ENCODE measurements at regions of chr5 and their contacts with region 1.

Region 1: GRCh38 chr5:102681407-102681983 is 73.6 kb upstream of the PAM start:
- DNase-seq: peak; percentile 3
- ATAC-seq: peak; percentile 97
- H3K4me3 ChIP-seq: no peak overlapping the region
- H3K27ac ChIP-seq: no peak overlapping the region
- H3K4me1 ChIP-seq: no peaks in the 10 kb centered on the region
- H3K27me3 ChIP-seq: no peaks in the 10 kb centered on the region
- CTCF ChIP-seq: peak; percentile 83 to 94 (median 86); a peak in 5 of 6 replicates
- EP300 ChIP-seq: no peak
- POLR2A ChIP-seq: no peak
- RAD21 ChIP-seq: peak; percentile 92

Region 2: GRCh38 chr5:102700120-102700831 is 18.8 kb after region 1 on chr5:
- CTCF ChIA-PET with region 1: interaction called, 23 read pairs
- POLR2A ChIA-PET with region 1: no interaction called
- RAD21 ChIA-PET with region 1: interaction called, 3 read pairs
- SMC1A ChIA-PET with region 1: interaction called, 8 read pairs
- in situ Hi-C with region 1: no loop called
- intact Hi-C with region 1: no loop called
- DNase-seq: no peak
- ATAC-seq: no peak
- H3K4me3 ChIP-seq: no peak overlapping the region
- H3K27ac ChIP-seq: no peak overlapping the region
- H3K4me1 ChIP-seq: no peaks in the 10 kb centered on the region
- H3K27me3 ChIP-seq: no peaks in the 10 kb centered on the region
- CTCF ChIP-seq: no peak
- EP300 ChIP-seq: no peak
- POLR2A ChIP-seq: no peak
- RAD21 ChIP-seq: no peak

Region 3: DNA sequence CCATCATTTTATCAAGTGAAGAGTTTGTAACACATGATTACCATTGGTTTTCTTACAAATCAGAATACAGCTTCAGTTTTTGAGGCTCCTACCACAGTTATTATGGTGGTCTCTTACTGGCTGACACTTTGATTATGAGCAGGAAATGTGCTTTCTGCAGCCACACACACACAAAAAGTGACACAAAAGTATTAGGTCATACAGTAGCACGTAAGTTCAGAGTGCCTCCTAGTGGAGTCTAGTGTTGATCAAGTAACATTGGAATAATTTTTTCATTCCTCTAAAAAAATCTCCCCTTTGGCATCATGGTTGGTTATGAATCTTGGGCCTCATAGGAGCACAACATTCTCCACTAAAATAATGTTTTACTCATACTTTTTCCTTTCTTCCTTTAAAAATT is 111.2 kb after region 1 on chr5:
- CTCF ChIA-PET with region 1: interaction called, 16 read pairs
- POLR2A ChIA-PET with region 1: no interaction called
- RAD21 ChIA-PET with region 1: no interaction called
- SMC1A ChIA-PET with region 1: interaction called, 5 read pairs
- in situ Hi-C with region 1: no loop called
- intact Hi-C with region 1: loop called (anchors 5 kb)
- DNase-seq: no peak
- ATAC-seq: peak; percentile 55
- H3K4me3 ChIP-seq: no peak overlapping the region
- H3K27ac ChIP-seq: no peak overlapping the region
- H3K4me1 ChIP-seq: no peaks in the 10 kb centered on the region
- H3K27me3 ChIP-seq: no peaks in the 10 kb centered on the region
- CTCF ChIP-seq: peak in 2 of 3 experiments; percentile 18 to 32; a peak in 2 of 6 replicates
- EP300 ChIP-seq: no peak
- POLR2A ChIP-seq: no peak
- RAD21 ChIP-seq: peak; percentile 31; the same call in 1 of the 2 replicates

Region 4: DNA sequence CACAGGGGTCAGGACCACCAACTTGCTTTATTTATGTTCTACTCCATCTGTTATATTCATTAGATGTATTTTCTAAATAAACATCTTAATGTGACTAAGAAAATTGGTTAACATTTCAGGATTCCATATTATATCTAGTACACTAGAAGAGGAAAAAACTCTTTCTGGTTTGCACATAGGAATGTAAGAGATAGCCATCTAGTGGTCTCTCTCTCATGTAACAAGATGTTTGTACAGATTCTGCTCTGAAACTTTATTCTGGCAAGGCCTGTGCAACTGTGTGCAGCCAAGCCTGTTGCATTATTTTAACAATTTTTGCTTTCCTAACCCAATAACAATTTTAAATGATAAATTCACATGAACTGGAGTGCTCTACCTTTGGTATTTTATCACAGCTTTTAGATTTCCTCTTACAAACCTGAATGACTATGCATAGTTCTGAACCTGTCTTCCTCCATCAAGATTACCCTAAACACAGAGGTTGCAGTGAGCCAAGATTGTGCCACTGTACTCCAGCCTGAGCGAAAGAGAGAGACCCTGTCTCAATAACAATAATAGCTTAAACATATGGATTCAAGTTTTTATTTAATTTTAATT is 290.3 kb after region 1 on chr5:
- CTCF ChIA-PET with region 1: interaction called, 44 read pairs
- POLR2A ChIA-PET with region 1: no interaction called
- RAD21 ChIA-PET with region 1: interaction called, 5 read pairs
- SMC1A ChIA-PET with region 1: interaction called, 15 read pairs
- in situ Hi-C with region 1: no loop called
- intact Hi-C with region 1: loop called (anchors 2 kb)
- DNase-seq: no peak
- ATAC-seq: peak; percentile 63
- H3K4me3 ChIP-seq: no peak overlapping the region
- H3K27ac ChIP-seq: no peak overlapping the region
- H3K4me1 ChIP-seq: no peaks in the 10 kb centered on the region
- H3K27me3 ChIP-seq: no peaks in the 10 kb centered on the region
- CTCF ChIP-seq: peak; percentile 34 to 50 (median 43); a peak in 4 of 6 replicates
- EP300 ChIP-seq: no peak
- POLR2A ChIP-seq: no peak
- RAD21 ChIP-seq: peak; percentile 53

Region 5: DNA sequence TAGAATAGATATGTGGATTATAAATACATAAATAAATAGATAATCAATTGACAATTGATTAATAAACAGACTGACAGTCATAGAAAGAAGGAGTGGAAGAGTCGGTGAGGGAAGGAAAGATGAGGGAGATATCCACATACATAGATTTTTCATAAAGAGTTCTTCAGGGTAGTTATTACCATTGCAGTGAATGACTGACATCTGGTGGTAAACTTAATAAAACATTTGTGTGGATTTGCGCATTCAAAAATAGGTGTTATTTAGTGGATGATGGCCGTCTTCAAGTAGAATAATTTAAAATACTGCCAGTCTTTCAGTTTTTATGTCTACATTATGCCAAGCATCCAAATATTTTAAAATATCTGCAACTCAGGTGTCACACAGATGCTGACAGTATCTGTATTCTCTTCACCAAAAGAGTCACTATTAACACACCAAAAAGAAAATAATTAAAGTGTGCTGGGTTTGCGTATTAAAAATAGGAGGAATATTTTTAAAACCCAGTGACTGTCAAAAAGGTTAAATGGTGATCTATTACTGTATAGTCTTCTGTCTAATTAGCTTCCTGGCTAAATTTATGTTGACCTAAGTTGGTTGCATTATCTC is 359.7 kb after region 1 on chr5:
- CTCF ChIA-PET with region 1: interaction called, 37 read pairs
- POLR2A ChIA-PET with region 1: no interaction called
- RAD21 ChIA-PET with region 1: interaction called, 11 read pairs
- SMC1A ChIA-PET with region 1: interaction called, 31 read pairs
- in situ Hi-C with region 1: loop called (anchors 10 kb)
- intact Hi-C with region 1: loop called (anchors 1 kb)
- DNase-seq: no peak
- ATAC-seq: peak; percentile 68
- H3K4me3 ChIP-seq: no peak overlapping the region
- H3K27ac ChIP-seq: no peak overlapping the region
- H3K4me1 ChIP-seq: no peaks in the 10 kb centered on the region
- H3K27me3 ChIP-seq: no peaks in the 10 kb centered on the region
- CTCF ChIP-seq: peak; percentile 16 to 58 (median 28); a peak in 4 of 6 replicates
- EP300 ChIP-seq: no peak
- POLR2A ChIP-seq: no peak
- RAD21 ChIP-seq: peak; percentile 79

Region 6: DNA sequence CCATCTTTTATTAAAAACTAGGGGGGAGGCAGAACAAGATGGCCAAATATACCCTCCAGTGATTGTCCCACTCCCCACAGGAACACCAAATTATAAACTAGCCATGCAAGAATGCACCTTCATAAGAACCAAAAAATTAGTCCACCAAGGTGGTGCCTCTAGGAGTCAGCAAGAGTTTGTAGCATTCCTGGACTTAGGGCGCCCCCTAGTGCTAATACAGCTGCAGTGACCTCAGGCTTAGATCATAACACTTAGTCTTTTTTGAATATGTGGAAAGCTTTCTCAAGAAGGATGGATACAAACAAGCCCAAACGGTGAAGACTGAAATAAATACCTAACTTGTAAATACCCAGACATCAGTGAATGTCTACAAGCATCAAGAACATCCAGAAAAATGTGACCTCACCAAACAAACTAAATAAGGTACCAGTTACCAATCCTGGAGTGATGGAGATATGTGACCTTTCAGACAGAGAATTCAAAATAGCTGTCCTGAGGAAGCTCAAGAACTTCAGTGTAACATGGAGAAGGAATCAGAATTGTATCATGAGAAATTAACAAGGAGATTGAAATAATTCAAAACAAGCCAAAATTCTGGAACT is 457.9 kb after region 1 on chr5:
- CTCF ChIA-PET with region 1: interaction called, 54 read pairs
- POLR2A ChIA-PET with region 1: no interaction called
- RAD21 ChIA-PET with region 1: interaction called, 27 read pairs
- SMC1A ChIA-PET with region 1: interaction called, 25 read pairs
- in situ Hi-C with region 1: loop called (anchors 5 kb)
- intact Hi-C with region 1: loop called (anchors 1 kb)
- DNase-seq: peak; percentile 30
- ATAC-seq: peak; percentile 100
- H3K4me3 ChIP-seq: no peak overlapping the region
- H3K27ac ChIP-seq: no peak overlapping the region
- H3K4me1 ChIP-seq: no peaks in the 10 kb centered on the region
- H3K27me3 ChIP-seq: no peaks in the 10 kb centered on the region
- CTCF ChIP-seq: peak; percentile 83 to 96 (median 94); a peak in 5 of 6 replicates
- EP300 ChIP-seq: no peak
- POLR2A ChIP-seq: no peak
- RAD21 ChIP-seq: peak; percentile 98